ENCODE measurements at regions of chr1 and their contacts with region 1.

Region 1: GRCh38 chr1:52365746-52366516 is at the start of gene CC2D1B:
- DNase-seq: peak; percentile 100
- H3K4me3 Mint-ChIP-seq: peak within 1 kb of the TSS; percentile 97
- H3K27ac Mint-ChIP-seq: peak within 1 kb of the TSS; percentile 92
- H3K4me1 Mint-ChIP-seq: peaks cover 39% of the 10 kb centered on the region
- H3K27me3 Mint-ChIP-seq: no peaks in the 10 kb centered on the region
- total RNA-seq, gene CC2D1B: 34.8 and 36.7 TPM in 2 replicates

Region 2: DNA sequence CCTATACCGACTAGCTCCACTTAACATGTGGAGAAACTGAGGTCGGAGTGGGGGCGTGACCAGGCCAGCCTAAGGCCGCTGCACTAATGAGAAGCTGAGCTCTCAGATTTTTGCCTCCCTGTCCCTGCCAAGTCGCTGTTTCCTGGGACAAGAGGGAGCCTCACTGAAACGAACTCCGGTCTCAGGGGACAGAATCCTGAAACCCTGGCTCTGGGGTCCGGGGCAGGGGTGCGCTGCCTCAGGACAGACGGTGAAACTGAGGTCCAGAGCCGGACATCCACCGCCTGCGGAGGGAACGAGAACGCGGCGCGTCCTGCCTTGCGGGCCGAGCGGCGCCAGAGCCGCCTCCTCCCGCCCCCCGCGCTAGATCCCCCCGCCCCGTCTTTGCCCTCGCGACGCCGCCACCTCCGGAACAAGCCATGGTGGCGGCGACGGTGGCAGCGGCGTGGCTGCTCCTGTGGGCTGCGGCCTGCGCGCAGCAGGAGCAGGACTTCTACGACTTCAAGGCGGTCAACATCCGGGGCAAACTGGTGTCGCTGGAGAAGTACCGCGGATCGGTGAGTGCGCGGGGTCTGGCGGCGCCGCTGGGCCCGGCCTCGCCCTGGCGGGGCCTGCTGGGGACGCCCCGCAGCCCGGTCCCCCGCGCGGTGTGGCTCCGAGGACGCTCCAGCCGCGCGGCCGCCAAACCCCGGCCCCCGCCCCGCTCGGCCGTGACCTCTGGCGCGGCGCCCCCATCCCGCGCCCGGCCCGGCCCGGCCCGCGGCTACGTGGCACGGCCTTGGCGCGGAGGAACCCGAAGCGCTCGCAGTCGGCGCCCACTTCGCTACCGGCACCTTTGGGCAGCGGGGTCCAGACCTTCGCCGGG is 236.3 kb after region 1 on chr1 and contains the start of gene GPX7:
- intact Hi-C with region 1: loop called (anchors 1 kb)
- DNase-seq: peak; percentile 91
- H3K4me3 Mint-ChIP-seq: peak within 1 kb of the TSS; percentile 84
- H3K27ac Mint-ChIP-seq: peak within 1 kb of the TSS; percentile 87
- H3K4me1 Mint-ChIP-seq: peaks cover 37% of the 10 kb centered on the region
- H3K27me3 Mint-ChIP-seq: no peaks in the 10 kb centered on the region
- total RNA-seq, gene GPX7: 28.0 and 29.4 TPM in 2 replicates